K562 (cell line): ENCODE measurements at regions of chr2 and their contacts with region 1.

Region 1: DNA sequence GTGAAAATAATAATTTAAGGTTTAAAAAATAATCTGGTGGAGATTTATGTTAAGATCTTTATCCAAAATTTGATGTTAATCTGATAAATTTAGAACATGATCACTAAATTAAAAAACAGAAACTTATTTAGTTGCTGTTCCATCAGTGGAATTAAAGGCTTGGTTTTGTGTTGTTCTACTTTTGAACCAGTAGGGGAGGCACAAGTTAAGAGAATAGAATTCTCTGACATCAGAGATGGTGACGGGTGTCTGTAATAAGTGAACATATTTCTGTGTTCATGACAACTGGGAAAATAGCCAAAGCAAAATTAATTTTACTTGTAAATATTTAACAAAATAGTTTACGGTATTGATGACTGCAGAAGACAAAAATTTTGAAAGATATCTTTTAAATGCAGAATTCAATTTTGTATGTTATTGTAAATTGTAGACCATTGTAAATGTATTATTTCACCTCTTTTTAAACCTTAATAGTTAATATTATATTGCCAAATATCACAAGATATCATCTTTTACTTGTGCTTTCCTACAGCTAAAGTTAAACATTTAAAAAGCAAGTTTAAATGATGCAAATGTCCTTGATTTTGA is 106.0 kb downstream of the UBR3 start:
- DNase-seq: peak; percentile 52 to 66 (median 65)
- ATAC-seq: peak; percentile 90
- H3K4me3 ChIP-seq: no peak overlapping the region
- H3K27ac ChIP-seq: no peak overlapping the region
- H3K4me1 ChIP-seq: no peaks in the 10 kb centered on the region
- H3K27me3 ChIP-seq: no peaks in the 10 kb centered on the region
- CTCF ChIP-seq: peak; percentile 64 to 95 (median 75); a peak in 5 of 6 replicates
- EP300 ChIP-seq: no peak
- POLR2A ChIP-seq: no peak
- RAD21 ChIP-seq: peak; percentile 94 to 95

Region 2: DNA sequence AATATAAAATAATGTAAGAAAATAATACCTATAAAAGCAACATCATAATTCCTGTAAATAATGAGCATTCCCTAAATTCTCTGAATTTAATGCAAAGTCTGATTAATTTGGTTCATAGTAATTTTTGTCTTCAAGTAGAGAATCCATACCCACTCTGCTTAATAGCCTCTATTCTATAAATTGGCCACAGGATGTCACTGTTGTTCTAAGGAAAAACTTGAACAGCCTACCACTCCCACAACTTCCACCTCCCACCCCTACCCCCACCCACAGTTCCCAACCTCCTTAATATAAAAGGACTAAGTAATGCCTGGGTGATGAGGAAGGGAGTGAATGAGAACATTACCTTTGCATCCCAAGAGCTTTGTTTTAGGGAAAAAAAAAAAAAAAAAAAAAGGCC is 481.1 kb before region 1 on chr2:
- CTCF ChIA-PET with region 1: interaction called, 21 read pairs
- POLR2A ChIA-PET with region 1: no interaction called
- in situ Hi-C with region 1: loop called (anchors 10 kb)
- intact Hi-C with region 1: loop called (anchors 2 kb)
- DNase-seq: peak; percentile 51 to 78 (median 58)
- ATAC-seq: peak; percentile 97
- H3K4me3 ChIP-seq: no peak overlapping the region
- H3K27ac ChIP-seq: no peak overlapping the region
- H3K4me1 ChIP-seq: no peaks in the 10 kb centered on the region; a peak in 1 of 5 replicates
- H3K27me3 ChIP-seq: no peaks in the 10 kb centered on the region
- CTCF ChIP-seq: peak; percentile 34 to 76 (median 49); a peak in 4 of 6 replicates
- EP300 ChIP-seq: no peak
- POLR2A ChIP-seq: no peak
- RAD21 ChIP-seq: peak; percentile 57 to 71

Region 3: GRCh38 chr2:169573160-169573973 is 359.9 kb before region 1 on chr2 and contains the start of gene FASTKD1:
- CTCF ChIA-PET with region 1: no interaction called
- POLR2A ChIA-PET with region 1: no interaction called
- in situ Hi-C with region 1: no loop called
- intact Hi-C with region 1: loop called (anchors 10 kb)
- DNase-seq: peak; percentile 83 to 99 (median 89)
- ATAC-seq: peak; percentile 93
- H3K4me3 ChIP-seq: peak within 1 kb of the TSS; percentile 61
- H3K27ac ChIP-seq: peak within 1 kb of the TSS; percentile 85
- H3K4me1 ChIP-seq: peaks cover 4 to 18% of the 10 kb centered on the region in 2 experiments; a peak in 4 of 5 replicates
- H3K27me3 ChIP-seq: no peaks in the 10 kb centered on the region
- CTCF ChIP-seq: no peak
- EP300 ChIP-seq: peak; percentile 59
- POLR2A ChIP-seq: peak; percentile 88
- RAD21 ChIP-seq: no peak
- polyA plus RNA-seq, gene FASTKD1: 121 to 132 TPM

Region 4: DNA sequence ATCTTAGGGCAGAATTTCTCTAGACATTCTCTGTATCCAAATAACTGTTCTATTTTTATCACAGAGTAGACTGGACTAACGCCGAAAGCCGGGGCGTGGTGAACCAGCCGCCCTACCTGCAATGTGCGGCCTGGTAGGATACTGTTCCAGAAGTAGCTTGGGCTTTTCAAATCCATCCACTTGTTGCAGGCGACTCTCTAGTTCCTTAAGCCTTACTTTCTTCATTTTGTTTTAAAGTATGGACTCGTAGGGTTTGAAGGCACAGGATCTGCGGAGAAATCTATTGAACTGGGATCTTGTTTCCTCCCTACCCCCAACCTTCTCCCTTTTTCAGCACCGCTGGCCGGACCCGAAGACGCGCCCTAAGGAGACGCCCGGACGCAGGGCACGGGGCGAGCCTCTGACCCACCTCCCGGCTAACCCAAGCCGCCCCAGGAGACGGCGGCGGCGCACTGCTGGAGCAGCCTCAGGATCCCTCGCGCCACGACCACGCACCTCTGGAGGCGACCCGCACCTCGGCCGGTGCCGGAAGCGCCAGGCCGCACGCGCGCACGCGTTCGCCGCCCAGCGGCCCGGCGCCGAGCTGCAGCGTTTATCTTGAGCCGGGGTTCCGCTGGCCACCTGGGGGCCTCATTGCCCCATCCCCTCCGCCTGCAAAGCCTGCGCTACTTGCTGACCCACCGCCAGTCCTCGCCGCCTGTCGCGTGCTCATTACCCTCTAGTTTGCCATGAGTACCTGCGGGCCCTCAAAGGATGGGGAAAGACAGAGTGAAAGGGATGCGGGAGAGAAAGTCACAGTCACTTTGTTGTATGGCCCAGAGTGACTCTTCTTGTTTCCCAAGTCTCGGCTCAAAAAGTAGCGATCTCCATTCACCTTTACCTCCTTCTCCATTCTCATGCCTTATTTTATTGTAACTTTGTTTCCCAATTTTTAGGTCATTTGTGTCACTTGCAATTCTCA is 108.6 kb before region 1 on chr2 and contains the start of gene METTL5:
- CTCF ChIA-PET with region 1: interaction called, 74 read pairs
- POLR2A ChIA-PET with region 1: interaction called, 4 read pairs
- in situ Hi-C with region 1: loop called (anchors 5 kb)
- intact Hi-C with region 1: loop called (anchors 1 kb)
- DNase-seq: peak; percentile 92 to 96 (median 94)
- ATAC-seq: peak; percentile 72
- H3K4me3 ChIP-seq: peak within 1 kb of the TSS; percentile 65
- H3K27ac ChIP-seq: peak within 1 kb of the TSS; percentile 79
- H3K4me1 ChIP-seq: peaks cover 12 to 30% of the 10 kb centered on the region in 2 experiments; a peak in 4 of 5 replicates
- H3K27me3 ChIP-seq: no peaks in the 10 kb centered on the region
- CTCF ChIP-seq: peak; percentile 99 to 100 (median 100)
- EP300 ChIP-seq: peak; percentile 57
- POLR2A ChIP-seq: peak; percentile 91
- RAD21 ChIP-seq: peak; percentile 100
- polyA plus RNA-seq, gene METTL5: 366 to 471 TPM

Region 5: GRCh38 chr2:170155022-170155722 is 222.0 kb after region 1 on chr2:
- CTCF ChIA-PET with region 1: no interaction called
- POLR2A ChIA-PET with region 1: no interaction called
- in situ Hi-C with region 1: no loop called
- intact Hi-C with region 1: loop called (anchors 10 kb)
- DNase-seq: peak; percentile 61 to 78 (median 64)
- ATAC-seq: peak; percentile 62
- H3K4me3 ChIP-seq: no peak overlapping the region
- H3K27ac ChIP-seq: peak overlapping the region; percentile 29; the same call in 1 of the 3 replicates
- H3K4me1 ChIP-seq: peaks cover 14 to 28% of the 10 kb centered on the region in 2 experiments
- H3K27me3 ChIP-seq: no peaks in the 10 kb centered on the region
- CTCF ChIP-seq: peak; percentile 3 to 38 (median 18); a peak in 2 of 6 replicates
- EP300 ChIP-seq: peak; percentile 83
- POLR2A ChIP-seq: no peak
- RAD21 ChIP-seq: peak; percentile 28 to 52; a peak in 3 of 4 replicates

Region 6: DNA sequence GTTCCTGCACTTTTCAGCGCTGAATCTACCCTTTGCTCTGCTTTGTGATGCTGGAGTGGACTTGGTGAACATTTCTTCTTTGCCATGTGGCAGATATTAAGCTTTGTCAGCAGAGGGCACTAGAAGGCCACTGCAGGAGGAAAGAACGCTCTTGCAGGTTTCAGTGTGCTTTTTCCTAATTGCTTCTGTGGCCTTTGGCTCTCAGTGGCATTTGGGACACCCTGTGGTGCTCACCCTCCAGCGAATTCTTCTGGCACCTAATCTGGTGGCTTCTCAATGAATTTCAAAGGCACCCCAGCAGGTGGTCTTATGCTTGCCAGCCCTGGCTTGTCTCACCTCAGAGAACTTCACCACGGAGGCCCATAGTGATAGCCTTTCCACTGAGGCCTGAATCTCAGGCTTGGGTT is 391.4 kb after region 1 on chr2:
- CTCF ChIA-PET with region 1: no interaction called
- POLR2A ChIA-PET with region 1: no interaction called
- in situ Hi-C with region 1: no loop called
- intact Hi-C with region 1: loop called (anchors 5 kb)
- DNase-seq: peak; percentile 42 to 85 (median 60)
- ATAC-seq: peak; percentile 95
- H3K4me3 ChIP-seq: no peak overlapping the region
- H3K27ac ChIP-seq: no peak overlapping the region
- H3K4me1 ChIP-seq: peaks cover 0 to 22% of the 10 kb centered on the region in 2 experiments; a peak in 4 of 5 replicates
- H3K27me3 ChIP-seq: no peaks in the 10 kb centered on the region
- CTCF ChIP-seq: peak; percentile 93 to 95 (median 93)
- EP300 ChIP-seq: peak; percentile 45; the same call in 1 of the 2 replicates
- POLR2A ChIP-seq: no peak
- RAD21 ChIP-seq: peak; percentile 99